CD4-positive, alpha-beta memory T cell (primary cell): ENCODE measurements at regions of chr10 and their contacts with region 1.

Region 1: DNA sequence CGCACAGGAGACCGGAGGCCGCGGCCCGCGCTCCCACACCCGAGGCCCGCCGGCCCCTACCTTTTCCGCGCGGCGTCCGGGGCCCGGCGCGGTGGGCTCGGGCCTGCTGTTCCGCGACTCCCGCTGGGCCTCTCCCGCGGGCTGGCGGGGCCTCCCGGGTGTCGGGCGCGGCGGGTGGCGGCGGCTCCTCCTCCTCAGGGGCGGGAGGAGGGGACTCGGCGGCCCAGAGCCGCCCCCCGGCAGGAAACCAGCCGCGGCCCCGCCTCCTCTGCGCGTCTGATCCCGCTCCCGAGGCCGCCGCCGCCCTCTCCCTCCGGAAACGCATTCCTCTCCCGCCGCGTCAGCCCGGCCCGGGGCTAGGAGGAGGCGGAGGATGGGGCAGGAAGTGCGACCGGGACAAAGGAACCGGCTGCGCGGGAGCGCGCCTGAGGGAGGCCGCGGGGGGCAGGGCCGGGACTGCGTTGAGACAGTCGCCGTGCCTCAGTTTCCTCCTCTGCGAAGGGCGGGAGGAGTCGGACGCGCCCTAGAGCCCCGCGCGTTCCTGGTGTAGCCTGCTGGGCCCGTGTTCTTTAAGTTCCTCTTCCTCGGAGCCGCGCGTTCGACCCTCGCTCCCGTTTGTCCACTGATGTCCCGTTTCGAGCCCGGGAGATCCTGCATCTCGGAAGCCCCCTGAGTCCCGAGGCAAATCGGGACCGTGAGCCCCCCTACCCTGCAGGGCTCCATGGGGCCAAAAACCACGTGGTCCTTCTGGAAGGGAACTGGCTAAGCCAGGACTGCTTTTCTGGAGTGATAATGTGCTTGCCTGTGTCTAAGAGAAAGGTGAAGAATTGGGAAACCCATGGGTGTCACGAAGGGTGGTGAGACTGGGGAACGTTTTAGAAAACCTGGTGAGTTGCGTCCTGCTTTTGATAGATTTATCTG is at the start of gene ITGB1:
- DNase-seq: peak; percentile 83 to 85 (median 85)
- H3K4me3 ChIP-seq: peak within 1 kb of the TSS; percentile 76 to 88
- H3K4me3 Mint-ChIP-seq: peak within 1 kb of the TSS; percentile 87 to 96 (median 92)
- H3K27ac ChIP-seq: peak within 1 kb of the TSS; percentile 69
- H3K27ac Mint-ChIP-seq: peak within 1 kb of the TSS; percentile 90 to 96 (median 94)
- H3K4me1 ChIP-seq: peaks cover 35% of the 10 kb centered on the region
- H3K4me1 Mint-ChIP-seq: peaks cover 41 to 61% (median 48%) of the 10 kb centered on the region in 4 donors
- H3K27me3 ChIP-seq: no peaks in the 10 kb centered on the region
- H3K27me3 Mint-ChIP-seq: no peaks in the 10 kb centered on the region
- total RNA-seq, gene ITGB1: 420 to 435 TPM

Region 2: GRCh38 chr10:32938554-32939061 is 19.7 kb before region 1 on chr10:
- CTCF ChIA-PET with region 1: interaction called, 3 read pairs
- POLR2A ChIA-PET with region 1: interaction called, 18 read pairs
- intact Hi-C with region 1: loop called (anchors 2 kb)
- DNase-seq: no peak
- H3K4me3 ChIP-seq: no peak overlapping the region
- H3K4me3 Mint-ChIP-seq: peak overlapping the region; percentile 63 to 84 (median 73)
- H3K27ac ChIP-seq: peak overlapping the region; percentile 27
- H3K27ac Mint-ChIP-seq: peak overlapping the region; percentile 64 to 91 (median 77)
- H3K4me1 ChIP-seq: peaks cover 92% of the 10 kb centered on the region
- H3K4me1 Mint-ChIP-seq: peaks cover 63 to 96% (median 77%) of the 10 kb centered on the region in 4 donors
- H3K27me3 ChIP-seq: no peaks in the 10 kb centered on the region
- H3K27me3 Mint-ChIP-seq: no peaks in the 10 kb centered on the region

Region 3: DNA sequence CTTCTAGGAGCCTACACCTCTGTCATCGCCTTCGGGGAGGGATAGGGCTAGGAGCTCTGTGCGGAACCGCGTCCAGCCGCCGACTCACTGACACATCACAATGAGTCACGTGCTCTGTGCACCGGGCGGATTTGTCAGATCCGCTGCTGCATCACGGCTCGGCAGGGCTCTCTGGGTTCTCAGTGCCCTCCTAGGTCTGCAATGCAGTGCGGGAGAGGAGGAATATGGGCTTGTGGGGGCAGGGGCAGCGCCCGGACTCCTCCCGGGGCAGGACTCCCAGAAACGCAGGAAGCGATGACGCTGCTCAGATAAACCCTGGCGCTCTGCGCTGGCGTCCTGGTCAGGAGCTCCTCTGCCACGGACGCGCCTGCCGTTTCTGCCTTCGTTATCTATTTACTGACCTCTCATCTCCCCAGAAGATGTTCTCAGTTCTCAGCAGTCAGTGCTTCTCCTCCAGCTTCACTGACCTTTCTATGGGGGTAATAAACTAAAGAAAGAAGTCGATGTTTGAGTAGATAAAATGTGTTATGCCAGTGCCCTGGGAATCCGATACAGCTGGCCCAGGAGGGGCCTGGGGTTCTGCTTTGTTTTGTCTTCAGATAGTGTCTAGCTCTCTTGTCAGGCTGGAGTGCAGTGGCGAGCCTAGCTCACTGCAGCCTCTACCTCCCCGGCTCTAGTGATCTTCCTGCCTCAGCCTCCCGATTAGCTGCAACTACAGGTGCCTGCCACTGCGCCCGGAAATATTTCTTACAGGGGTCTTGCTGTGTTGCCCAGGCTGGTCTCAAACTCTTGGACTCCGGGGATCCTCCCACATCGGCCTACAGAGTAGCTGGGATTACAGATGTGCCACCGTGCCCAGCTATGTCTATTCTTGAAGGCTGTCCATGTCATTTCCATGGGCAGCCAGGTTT is 22.5 kb after region 1 on chr10:
- CTCF ChIA-PET with region 1: interaction called, 25 read pairs
- POLR2A ChIA-PET with region 1: interaction called, 131 read pairs
- intact Hi-C with region 1: loop called (anchors 1 kb)
- DNase-seq: peak; percentile 77 to 94 (median 80)
- H3K4me3 ChIP-seq: peak overlapping the region; percentile 30 to 87
- H3K4me3 Mint-ChIP-seq: peak overlapping the region; percentile 93 to 98 (median 95)
- H3K27ac ChIP-seq: peak overlapping the region; percentile 84
- H3K27ac Mint-ChIP-seq: peak overlapping the region; percentile 92 to 99 (median 98)
- H3K4me1 ChIP-seq: peaks cover 40% of the 10 kb centered on the region
- H3K4me1 Mint-ChIP-seq: peaks cover 25 to 39% (median 34%) of the 10 kb centered on the region in 4 donors
- H3K27me3 ChIP-seq: no peaks in the 10 kb centered on the region
- H3K27me3 Mint-ChIP-seq: no peaks in the 10 kb centered on the region

Region 4: GRCh38 chr10:33125522-33126517 is 167.5 kb after region 1 on chr10:
- CTCF ChIA-PET with region 1: interaction called, 3 read pairs
- POLR2A ChIA-PET with region 1: interaction called, 11 read pairs
- intact Hi-C with region 1: no loop called
- DNase-seq: peak; percentile 58 to 72 (median 66)
- H3K4me3 ChIP-seq: no peak overlapping the region
- H3K4me3 Mint-ChIP-seq: peak overlapping the region; percentile 37 to 81 (median 65)
- H3K27ac ChIP-seq: peak overlapping the region; percentile 72
- H3K27ac Mint-ChIP-seq: peak overlapping the region; percentile 91 to 98 (median 97)
- H3K4me1 ChIP-seq: peaks cover 93% of the 10 kb centered on the region
- H3K4me1 Mint-ChIP-seq: peaks cover 61 to 98% (median 84%) of the 10 kb centered on the region in 4 donors
- H3K27me3 ChIP-seq: no peaks in the 10 kb centered on the region
- H3K27me3 Mint-ChIP-seq: no peaks in the 10 kb centered on the region

Region 5: DNA sequence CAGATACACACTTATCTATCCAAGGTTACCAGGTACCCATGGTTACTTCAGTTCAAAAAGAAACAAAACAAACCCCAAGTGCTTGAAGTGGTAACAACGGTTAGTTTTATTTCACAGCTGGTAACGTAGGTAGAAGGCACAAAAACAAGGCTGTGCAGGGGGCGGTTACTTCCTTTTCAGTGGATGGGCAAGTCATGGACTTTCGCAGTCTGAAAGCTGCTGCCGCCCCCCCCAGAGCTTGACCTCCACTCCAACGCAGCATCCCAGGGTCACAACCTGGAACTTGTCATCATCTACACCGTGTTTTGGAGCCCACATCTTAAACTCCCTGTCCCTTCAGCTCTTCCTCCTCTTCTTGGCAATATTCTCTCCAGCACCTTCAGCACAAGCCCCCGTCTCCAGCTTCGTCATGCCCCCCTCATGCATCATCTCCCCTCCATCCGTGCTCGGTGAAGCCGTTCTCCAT is 180.9 kb after region 1 on chr10:
- CTCF ChIA-PET with region 1: interaction called, 3 read pairs
- POLR2A ChIA-PET with region 1: interaction called, 17 read pairs
- intact Hi-C with region 1: loop called (anchors 2 kb)
- DNase-seq: peak; percentile 94 to 97 (median 95)
- H3K4me3 ChIP-seq: peak overlapping the region; percentile 10 to 54
- H3K4me3 Mint-ChIP-seq: peak overlapping the region; percentile 57 to 81 (median 75)
- H3K27ac ChIP-seq: peak overlapping the region; percentile 84
- H3K27ac Mint-ChIP-seq: peak overlapping the region; percentile 98 to 100 (median 100)
- H3K4me1 ChIP-seq: peaks cover 92% of the 10 kb centered on the region
- H3K4me1 Mint-ChIP-seq: peaks cover 63 to 93% (median 80%) of the 10 kb centered on the region in 4 donors
- H3K27me3 ChIP-seq: no peaks in the 10 kb centered on the region
- H3K27me3 Mint-ChIP-seq: no peaks in the 10 kb centered on the region